Heart left ventricle (tissue), 16 donors: ENCODE measurements at regions of chr9 and their contacts with region 1.

Region 1: GRCh38 chr9:124420991-124421543 is 5.8 kb upstream of the PSMB7 start:
- DNase-seq: peak in 1 of 5 donors; percentile 38
- ATAC-seq: peak in 2 of 4 donors; percentile 11 to 23
- H3K4me3 ChIP-seq: no peak overlapping the region
- H3K27ac ChIP-seq: no peak overlapping the region
- H3K4me1 ChIP-seq: peaks cover 0 to 6% (median 0%) of the 10 kb centered on the region in 12 donors
- H3K27me3 ChIP-seq: no peaks in the 10 kb centered on the region
- CTCF ChIP-seq: no peak
- POLR2A ChIP-seq: no peak

Region 2: GRCh38 chr9:124480621-124480981 is 59.5 kb after region 1 on chr9:
- intact Hi-C with region 1: loop called in 3 of 10 experiments (anchors 2 to 5 kb)
- DNase-seq: peak in 2 of 5 donors; percentile 20 to 56
- ATAC-seq: peak in 3 of 4 donors; percentile 41 to 46 (median 42)
- H3K4me3 ChIP-seq: no peak overlapping the region
- H3K27ac ChIP-seq: no peak overlapping the region
- H3K4me1 ChIP-seq: peaks cover 0 to 15% (median 2%) of the 10 kb centered on the region in 12 donors
- H3K27me3 ChIP-seq: peaks cover 13 to 82% (median 36%) of the 10 kb centered on the region in 9 donors
- CTCF ChIP-seq: peak in 9 of 12 donors; percentile 5 to 45 (median 24)
- POLR2A ChIP-seq: no peak

Region 3: GRCh38 chr9:124537926-124538325 is 116.9 kb after region 1 on chr9:
- intact Hi-C with region 1: loop called (anchors 1 to 5 kb)
- DNase-seq: no peak
- ATAC-seq: no peak
- H3K4me3 ChIP-seq: no peak overlapping the region
- H3K27ac ChIP-seq: no peak overlapping the region
- H3K4me1 ChIP-seq: no peaks in the 10 kb centered on the region
- H3K27me3 ChIP-seq: no peaks in the 10 kb centered on the region
- CTCF ChIP-seq: no peak
- POLR2A ChIP-seq: no peak